ENCODE measurements at regions of chr7 and their contacts with region 1.

Region 1: DNA sequence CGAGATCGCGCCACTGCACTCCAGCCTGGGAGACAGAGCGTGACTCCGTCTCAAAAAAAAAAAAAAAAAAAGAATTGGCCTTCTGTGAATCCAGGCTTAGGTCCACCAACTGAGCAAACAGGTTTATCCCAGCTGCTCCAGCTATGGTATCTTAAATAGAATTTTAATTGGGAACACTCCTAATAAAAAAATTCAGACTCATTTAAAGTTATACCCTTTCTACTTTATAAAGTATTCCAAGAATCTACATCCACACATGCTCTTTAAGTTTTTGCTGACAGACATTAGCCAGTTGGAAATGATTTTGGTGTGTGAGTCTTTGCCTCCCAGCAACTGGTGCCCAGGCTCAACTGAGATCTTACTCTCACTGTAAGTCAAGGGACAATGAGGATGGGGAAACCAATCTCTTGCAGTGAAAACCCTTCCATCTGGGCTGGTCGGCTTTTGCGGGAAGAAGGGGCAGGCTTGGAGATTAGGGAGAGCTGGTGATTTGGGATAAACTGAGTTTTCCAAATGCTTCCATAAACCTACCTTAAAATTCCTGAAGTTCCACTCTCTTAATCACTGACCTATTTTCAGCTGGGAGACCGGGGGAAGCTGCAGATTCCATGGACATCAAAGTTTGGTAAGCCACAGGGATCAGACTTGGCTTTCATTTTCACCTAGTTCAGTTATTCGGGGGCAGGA is 89.2 kb upstream of the ZNF746 start:
- DNase-seq: no peak
- H3K4me3 ChIP-seq: no peak overlapping the region
- H3K27ac ChIP-seq: no peak overlapping the region
- H3K4me1 ChIP-seq: no peaks in the 10 kb centered on the region
- CTCF ChIP-seq: no peak

Region 2: DNA sequence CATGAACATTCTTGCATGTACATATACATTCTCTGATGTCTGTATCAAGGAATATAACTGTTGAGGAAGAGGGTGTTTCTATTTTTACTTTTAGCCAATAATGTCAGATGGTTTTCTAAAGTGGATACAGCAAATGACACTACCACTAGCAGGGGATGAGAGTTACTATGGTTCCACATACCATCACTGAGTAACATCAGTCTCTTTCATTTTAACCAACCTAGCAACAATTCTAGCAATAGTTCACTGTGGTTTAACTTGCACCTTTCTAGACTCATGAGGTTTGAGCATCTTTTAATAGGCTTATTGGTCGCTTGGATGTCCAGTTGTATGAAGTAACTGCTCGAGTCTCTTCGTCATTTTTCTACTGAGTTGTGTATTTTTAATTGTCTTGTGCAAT is 20.7 kb before region 1 on chr7:
- CTCF ChIA-PET with region 1: no interaction called
- POLR2A ChIA-PET with region 1: interaction called, 4 read pairs
- intact Hi-C with region 1: loop called (anchors 2 kb)
- DNase-seq: no peak
- H3K4me3 ChIP-seq: no peak overlapping the region
- H3K27ac ChIP-seq: no peak overlapping the region
- H3K4me1 ChIP-seq: no peaks in the 10 kb centered on the region
- CTCF ChIP-seq: no peak

Region 3: GRCh38 chr7:149635561-149636329 is 49.0 kb after region 1 on chr7:
- CTCF ChIA-PET with region 1: no interaction called
- POLR2A ChIA-PET with region 1: no interaction called
- intact Hi-C with region 1: no loop called
- DNase-seq: no peak
- H3K4me3 ChIP-seq: no peak overlapping the region
- H3K27ac ChIP-seq: no peak overlapping the region
- H3K4me1 ChIP-seq: no peaks in the 10 kb centered on the region
- CTCF ChIP-seq: no peak

Region 4: GRCh38 chr7:149790146-149790548 is 203.4 kb after region 1 on chr7:
- CTCF ChIA-PET with region 1: no interaction called
- POLR2A ChIA-PET with region 1: no interaction called
- intact Hi-C with region 1: loop called (anchors 5 kb)
- DNase-seq: no peak
- H3K4me3 ChIP-seq: no peak overlapping the region
- H3K27ac ChIP-seq: no peak overlapping the region
- H3K4me1 ChIP-seq: no peaks in the 10 kb centered on the region
- CTCF ChIP-seq: no peak

Measured in OCI-LY7 (cell line).